Kidney (tissue), 22 donors: ENCODE measurements at regions of chr17 and their contacts with region 1.

Region 1: GRCh38 chr17:42686520-42687144 is 4.3 kb downstream of the CNTNAP1 start:
- DNase-seq: peak in 2 of 5 donors; percentile 34 to 70
- H3K4me3 ChIP-seq: no peak overlapping the region
- H3K27ac ChIP-seq: no peak overlapping the region
- H3K4me1 ChIP-seq: peaks cover 0 to 15% (median 3%) of the 10 kb centered on the region in 3 donors
- H3K27me3 ChIP-seq: peaks cover 29% of the 10 kb centered on the region
- CTCF ChIP-seq: no peak

Region 2: GRCh38 chr17:42944211-42944610 is 257.6 kb after region 1 on chr17:
- intact Hi-C with region 1: loop called (anchors 5 kb)
- DNase-seq: no peak
- H3K4me3 ChIP-seq: no peak overlapping the region
- H3K27ac ChIP-seq: no peak overlapping the region
- H3K4me1 ChIP-seq: no peaks in the 10 kb centered on the region
- H3K27me3 ChIP-seq: no peaks in the 10 kb centered on the region
- CTCF ChIP-seq: no peak